Activated naive CD4-positive, alpha-beta T cell treated with anti-CD3 and anti-CD28 coated beads for 36 hours (primary cell): ENCODE measurements at regions of chr15 and their contacts with region 1.

Region 1: DNA sequence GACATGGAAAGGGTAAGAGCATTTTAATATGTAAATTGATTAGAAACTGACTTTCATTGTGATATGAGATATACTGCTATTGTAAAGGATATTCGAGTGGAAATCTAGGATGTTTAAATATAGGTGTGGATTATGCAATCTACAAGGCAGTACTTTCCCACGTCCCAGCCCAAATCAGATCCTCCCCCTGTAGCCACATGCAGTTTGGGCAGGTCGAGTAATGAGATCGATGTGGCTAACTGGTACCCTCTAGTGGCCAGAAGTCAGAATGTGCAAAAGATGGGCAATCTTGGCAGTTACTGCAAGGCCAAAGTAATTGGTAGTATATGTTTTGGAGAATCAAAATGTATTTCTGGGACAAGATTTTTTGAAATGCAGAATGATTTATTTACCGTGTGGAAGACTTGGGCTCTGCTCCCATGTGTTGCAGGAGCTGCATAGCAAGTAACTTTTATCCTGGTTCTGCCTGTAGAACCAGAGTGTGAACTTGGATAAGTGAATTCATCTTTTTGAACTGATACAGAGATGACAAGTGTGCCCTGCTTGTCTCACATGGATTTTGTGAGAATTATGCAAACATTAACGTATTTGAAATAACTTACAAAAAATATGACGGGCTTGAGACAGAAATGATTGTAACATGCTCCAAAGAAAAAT is 94.5 kb upstream of the ADAMTSL3 start:
- DNase-seq: peak; percentile 69
- H3K4me3 Mint-ChIP-seq: no peak overlapping the region
- H3K27ac Mint-ChIP-seq: no peak overlapping the region
- H3K4me1 Mint-ChIP-seq: no peaks in the 10 kb centered on the region
- H3K27me3 Mint-ChIP-seq: peaks cover 10% of the 10 kb centered on the region

Region 2: GRCh38 chr15:83436458-83437158 is 122.8 kb before region 1 on chr15:
- CTCF ChIA-PET with region 1: interaction called, 53 read pairs
- intact Hi-C with region 1: loop called (anchors 1 kb)
- DNase-seq: no peak
- H3K4me3 Mint-ChIP-seq: no peak overlapping the region
- H3K27ac Mint-ChIP-seq: no peak overlapping the region
- H3K4me1 Mint-ChIP-seq: peaks cover 5% of the 10 kb centered on the region
- H3K27me3 Mint-ChIP-seq: peaks cover 7% of the 10 kb centered on the region